ENCODE measurements at regions of chr7 and their contacts with region 1.

Region 1: GRCh38 chr7:28155019-28155660 is 25.5 kb downstream of the JAZF1 start:
- DNase-seq: no peak
- H3K4me3 Mint-ChIP-seq: peak overlapping the region; percentile 43
- H3K27ac Mint-ChIP-seq: peak overlapping the region; percentile 75
- H3K4me1 Mint-ChIP-seq: peaks cover 58% of the 10 kb centered on the region
- H3K27me3 Mint-ChIP-seq: peaks cover 5% of the 10 kb centered on the region

Region 2: GRCh38 chr7:26616235-26616634 is 1538.9 kb before region 1 on chr7:
- intact Hi-C with region 1: no loop called
- DNase-seq: no peak
- H3K4me3 Mint-ChIP-seq: no peak overlapping the region
- H3K27ac Mint-ChIP-seq: no peak overlapping the region
- H3K4me1 Mint-ChIP-seq: no peaks in the 10 kb centered on the region
- H3K27me3 Mint-ChIP-seq: peaks cover 3% of the 10 kb centered on the region

Region 3: DNA sequence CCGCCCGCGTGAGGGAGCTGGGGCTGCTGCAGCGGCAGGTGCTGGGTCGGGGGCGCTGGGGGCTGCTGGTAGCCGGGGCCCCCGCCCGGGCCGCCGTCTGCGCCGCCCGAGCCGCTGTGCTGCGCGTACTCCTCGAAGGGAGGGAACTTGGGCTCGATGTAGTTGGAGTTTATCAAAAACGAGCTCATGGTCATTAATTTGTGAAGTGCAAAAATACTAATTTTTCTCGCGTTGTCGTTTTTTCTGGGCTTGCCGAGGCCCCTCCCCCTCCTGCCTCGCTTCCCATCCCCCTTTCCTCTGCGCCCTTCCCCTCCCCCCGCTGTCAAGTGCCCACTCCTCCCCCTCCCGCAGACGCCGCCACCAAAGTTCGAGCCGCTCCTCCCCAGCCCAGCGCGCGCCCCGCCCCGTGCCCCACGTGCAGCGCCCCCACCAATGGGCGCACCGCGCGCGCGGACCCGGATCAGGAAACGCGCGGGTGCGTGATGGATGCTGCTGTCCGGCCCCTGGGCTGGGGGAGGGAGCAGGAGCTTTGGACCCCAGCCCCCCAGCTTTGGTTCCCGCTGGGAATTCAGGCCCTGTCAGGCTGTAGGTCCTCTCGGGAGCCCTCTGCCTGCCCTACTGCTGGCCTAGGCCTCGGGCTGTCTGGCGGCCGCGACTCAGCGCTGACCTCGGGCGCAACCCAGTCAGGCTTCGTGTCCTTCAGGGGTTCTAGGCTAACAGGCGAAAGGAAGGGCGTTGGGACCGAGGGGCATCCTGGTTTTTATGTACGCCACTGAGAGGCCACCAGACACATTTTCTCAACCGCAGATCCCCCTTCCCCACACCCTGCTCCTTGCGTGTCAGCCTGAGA is 1024.4 kb before region 1 on chr7 and contains the start of gene HOXA4:
- intact Hi-C with region 1: loop called (anchors 5 kb)
- DNase-seq: peak; percentile 67
- H3K4me3 Mint-ChIP-seq: peak within 1 kb of the TSS; percentile 51
- H3K27ac Mint-ChIP-seq: no peak within 1 kb of the TSS
- H3K4me1 Mint-ChIP-seq: peaks cover 27% of the 10 kb centered on the region
- H3K27me3 Mint-ChIP-seq: peaks cover 51% of the 10 kb centered on the region
- total RNA-seq, gene HOXA4: not detected in 2 replicates

Region 4: GRCh38 chr7:27739909-27740448 is 415.2 kb before region 1 on chr7 and contains the start of gene TAX1BP1:
- intact Hi-C with region 1: loop called (anchors 10 kb)
- DNase-seq: peak; percentile 93
- H3K4me3 Mint-ChIP-seq: peak within 1 kb of the TSS; percentile 92
- H3K27ac Mint-ChIP-seq: peak within 1 kb of the TSS; percentile 98
- H3K4me1 Mint-ChIP-seq: peaks cover 41% of the 10 kb centered on the region
- H3K27me3 Mint-ChIP-seq: peaks cover 2% of the 10 kb centered on the region
- total RNA-seq, gene TAX1BP1: 88.6 and 90.9 TPM in 2 replicates

Region 5: DNA sequence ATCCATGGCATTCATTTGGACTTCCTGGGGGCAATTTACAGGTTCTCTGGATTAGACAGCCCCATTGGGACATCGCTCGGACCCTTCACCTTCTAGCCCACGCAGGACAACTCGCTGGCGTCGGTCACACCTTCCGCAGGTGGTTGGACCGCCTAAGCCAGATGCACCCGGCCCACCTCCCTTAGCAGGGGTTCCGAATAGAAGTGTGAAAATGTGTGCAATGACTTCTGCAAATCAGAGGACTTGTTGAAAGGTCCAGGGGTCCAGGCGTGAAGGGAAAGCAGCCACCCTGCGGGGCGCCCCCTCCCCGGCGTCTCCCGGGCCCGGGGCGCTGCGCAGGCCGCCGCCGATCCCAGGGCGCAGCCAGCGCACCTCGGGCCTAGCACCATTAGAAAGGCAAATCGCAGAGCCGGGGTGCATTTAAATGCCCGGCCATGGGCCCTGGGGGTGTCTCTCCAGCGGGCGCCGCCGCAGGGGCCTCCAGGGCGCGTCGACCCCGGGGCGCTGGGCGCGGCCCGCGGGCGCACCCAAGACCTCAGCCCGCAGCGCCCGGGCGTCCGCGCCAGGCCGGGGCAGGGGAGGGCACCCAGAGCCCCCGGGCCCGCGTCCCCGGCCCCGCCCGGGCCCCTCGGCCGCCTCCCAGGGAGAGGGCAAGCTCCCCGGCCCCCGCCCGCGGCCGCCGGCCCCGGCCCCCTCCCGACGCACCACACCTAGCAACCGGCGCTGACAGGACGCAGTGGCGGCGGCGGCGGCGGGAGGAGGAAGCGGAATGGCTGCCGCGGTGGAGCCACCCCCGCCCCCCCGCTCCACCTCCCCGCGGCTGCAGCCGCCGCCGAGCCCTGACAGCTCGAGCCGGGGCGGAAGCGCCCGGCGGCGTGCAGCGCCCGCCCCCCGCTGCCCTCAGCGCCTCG is 24.2 kb after region 1 on chr7:
- intact Hi-C with region 1: loop called (anchors 1 kb)
- DNase-seq: peak; percentile 57
- H3K4me3 Mint-ChIP-seq: peak overlapping the region; percentile 82
- H3K27ac Mint-ChIP-seq: peak overlapping the region; percentile 62
- H3K4me1 Mint-ChIP-seq: peaks cover 23% of the 10 kb centered on the region
- H3K27me3 Mint-ChIP-seq: peaks cover 31% of the 10 kb centered on the region

Region 6: DNA sequence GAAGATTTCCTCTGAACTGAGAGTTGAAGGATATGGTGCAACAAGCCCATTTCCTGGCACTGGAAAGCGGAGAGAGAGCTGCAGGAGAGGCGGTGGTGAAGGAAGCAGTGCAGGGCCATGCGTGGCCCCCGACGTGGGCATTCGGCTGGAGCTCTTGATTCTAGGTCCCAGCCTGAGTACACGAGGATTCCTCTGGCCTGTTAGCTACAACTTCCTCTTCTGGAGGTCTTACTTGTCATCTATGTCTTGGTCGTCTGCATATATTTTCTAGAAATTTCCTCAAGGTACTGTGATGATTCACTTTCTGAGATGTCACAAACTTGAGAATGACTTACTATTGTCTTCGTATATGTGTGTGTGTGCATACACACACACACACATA is 84.7 kb after region 1 on chr7:
- intact Hi-C with region 1: loop called (anchors 1 kb)
- DNase-seq: no peak
- H3K4me3 Mint-ChIP-seq: peak overlapping the region; percentile 15
- H3K27ac Mint-ChIP-seq: peak overlapping the region; percentile 79
- H3K4me1 Mint-ChIP-seq: peaks cover 11% of the 10 kb centered on the region
- H3K27me3 Mint-ChIP-seq: peaks cover 48% of the 10 kb centered on the region

Region 7: GRCh38 chr7:28258240-28258639 is 103.1 kb after region 1 on chr7:
- intact Hi-C with region 1: no loop called
- DNase-seq: no peak
- H3K4me3 Mint-ChIP-seq: no peak overlapping the region
- H3K27ac Mint-ChIP-seq: no peak overlapping the region
- H3K4me1 Mint-ChIP-seq: no peaks in the 10 kb centered on the region
- H3K27me3 Mint-ChIP-seq: peaks cover 21% of the 10 kb centered on the region

Region 8: GRCh38 chr7:28329661-28330363 is 174.7 kb after region 1 on chr7:
- intact Hi-C with region 1: loop called (anchors 1 kb)
- DNase-seq: peak; percentile 6
- H3K4me3 Mint-ChIP-seq: peak overlapping the region; percentile 48
- H3K27ac Mint-ChIP-seq: no peak overlapping the region
- H3K4me1 Mint-ChIP-seq: peaks cover 28% of the 10 kb centered on the region
- H3K27me3 Mint-ChIP-seq: no peaks in the 10 kb centered on the region

Region 9: GRCh38 chr7:28378574-28379149 is 223.5 kb after region 1 on chr7:
- intact Hi-C with region 1: no loop called
- DNase-seq: no peak
- H3K4me3 Mint-ChIP-seq: no peak overlapping the region
- H3K27ac Mint-ChIP-seq: no peak overlapping the region
- H3K4me1 Mint-ChIP-seq: no peaks in the 10 kb centered on the region
- H3K27me3 Mint-ChIP-seq: no peaks in the 10 kb centered on the region

Measured in activated T-helper 1 cell treated with anti-CD3 and anti-CD28 coated beads, Interleukin-12 subunit alpha, Interleukin-12 subunit beta, Interleukin-2, Interleukin-4 antibody, amounts not matched to agents 30 ng/mL and 10 ng/mL and 1 ng/mL, durations not matched to agents 14 hours and 24 hours and 36 hours (primary cell).